ENCODE measurements at regions of chr3 and their contacts with region 1.

Region 1: DNA sequence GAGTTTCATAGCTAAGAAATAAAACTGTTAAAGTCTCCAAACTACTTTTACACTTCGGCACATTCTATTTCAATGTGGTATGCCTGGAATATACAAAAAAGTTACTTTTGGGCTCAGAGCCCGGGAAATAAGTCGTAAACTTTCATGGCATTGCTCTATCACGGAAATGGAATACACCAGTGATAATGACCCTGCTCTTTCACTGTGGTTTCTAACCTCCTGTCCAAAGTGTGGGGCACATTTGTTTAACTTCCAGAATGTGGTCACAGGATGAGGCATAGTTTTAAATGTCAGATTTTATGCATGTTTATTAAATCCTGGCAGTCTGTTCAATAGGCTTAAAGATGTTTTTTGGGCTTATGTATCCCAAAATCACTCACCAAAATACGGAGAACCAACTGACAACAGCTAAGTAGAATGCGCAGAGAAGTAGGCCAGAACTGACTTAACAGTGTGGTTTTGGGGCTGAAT is 5.1 kb downstream of the CXCR6 start:
- DNase-seq: no peak
- ATAC-seq: no peak
- H3K4me3 Mint-ChIP-seq: peak overlapping the region; percentile 34
- H3K27ac Mint-ChIP-seq: peak overlapping the region; percentile 88
- H3K4me1 Mint-ChIP-seq: peaks cover 97% of the 10 kb centered on the region
- H3K27me3 Mint-ChIP-seq: no peaks in the 10 kb centered on the region

Region 2: DNA sequence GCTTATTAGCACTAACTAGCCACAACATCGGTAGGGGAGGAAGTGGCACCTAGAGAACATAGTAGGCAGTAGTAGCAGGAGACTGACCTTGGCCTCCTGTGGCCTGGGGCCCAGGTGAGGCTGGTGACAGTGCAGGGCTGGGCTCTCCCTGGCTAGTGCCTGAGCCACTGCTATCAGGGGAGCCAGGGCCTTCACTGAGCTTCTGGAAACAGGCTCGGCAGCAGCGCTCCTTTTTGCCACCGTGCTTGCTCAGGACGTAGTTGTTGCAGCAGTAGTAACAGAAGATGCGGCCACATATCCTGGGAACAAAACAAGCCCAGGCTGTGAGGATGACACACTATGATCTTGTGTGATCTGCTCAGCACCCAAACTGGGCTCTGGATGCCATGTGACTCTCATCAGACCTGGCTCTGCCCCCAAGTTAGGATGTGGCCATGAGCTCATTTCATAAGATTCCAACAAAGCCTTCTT is 10.0 kb after region 1 on chr3:
- CTCF ChIA-PET with region 1: interaction called, 61 read pairs
- POLR2A ChIA-PET with region 1: interaction called, 12 read pairs
- DNase-seq: no peak
- ATAC-seq: no peak
- H3K4me3 Mint-ChIP-seq: no peak overlapping the region
- H3K27ac Mint-ChIP-seq: peak overlapping the region; percentile 69
- H3K4me1 Mint-ChIP-seq: peaks cover 76% of the 10 kb centered on the region
- H3K27me3 Mint-ChIP-seq: no peaks in the 10 kb centered on the region

Region 3: DNA sequence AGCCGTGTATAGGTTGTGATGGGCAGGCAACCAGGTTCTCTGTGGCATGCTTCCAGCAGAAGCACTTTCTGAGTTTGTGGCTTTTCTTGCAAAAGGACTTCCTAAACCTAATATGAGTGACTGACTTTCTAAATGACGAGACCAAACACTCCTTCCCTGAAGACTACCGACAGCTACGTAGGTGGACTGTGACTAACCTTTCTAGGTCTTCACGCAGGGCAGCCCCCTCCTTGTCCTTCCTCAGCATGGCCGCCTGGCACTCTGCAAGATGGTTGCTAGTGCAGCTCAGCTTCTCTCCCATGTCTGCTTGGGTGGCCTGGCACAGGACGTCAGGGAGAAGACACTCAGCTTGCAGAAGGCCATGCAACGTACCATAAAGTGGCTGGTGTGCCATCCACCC is 15.8 kb after region 1 on chr3:
- CTCF ChIA-PET with region 1: interaction called, 61 read pairs
- POLR2A ChIA-PET with region 1: interaction called, 15 read pairs
- DNase-seq: peak; percentile 59
- ATAC-seq: peak; percentile 50
- H3K4me3 Mint-ChIP-seq: peak overlapping the region; percentile 9
- H3K27ac Mint-ChIP-seq: peak overlapping the region; percentile 87
- H3K4me1 Mint-ChIP-seq: peaks cover 91% of the 10 kb centered on the region
- H3K27me3 Mint-ChIP-seq: no peaks in the 10 kb centered on the region

Region 4: DNA sequence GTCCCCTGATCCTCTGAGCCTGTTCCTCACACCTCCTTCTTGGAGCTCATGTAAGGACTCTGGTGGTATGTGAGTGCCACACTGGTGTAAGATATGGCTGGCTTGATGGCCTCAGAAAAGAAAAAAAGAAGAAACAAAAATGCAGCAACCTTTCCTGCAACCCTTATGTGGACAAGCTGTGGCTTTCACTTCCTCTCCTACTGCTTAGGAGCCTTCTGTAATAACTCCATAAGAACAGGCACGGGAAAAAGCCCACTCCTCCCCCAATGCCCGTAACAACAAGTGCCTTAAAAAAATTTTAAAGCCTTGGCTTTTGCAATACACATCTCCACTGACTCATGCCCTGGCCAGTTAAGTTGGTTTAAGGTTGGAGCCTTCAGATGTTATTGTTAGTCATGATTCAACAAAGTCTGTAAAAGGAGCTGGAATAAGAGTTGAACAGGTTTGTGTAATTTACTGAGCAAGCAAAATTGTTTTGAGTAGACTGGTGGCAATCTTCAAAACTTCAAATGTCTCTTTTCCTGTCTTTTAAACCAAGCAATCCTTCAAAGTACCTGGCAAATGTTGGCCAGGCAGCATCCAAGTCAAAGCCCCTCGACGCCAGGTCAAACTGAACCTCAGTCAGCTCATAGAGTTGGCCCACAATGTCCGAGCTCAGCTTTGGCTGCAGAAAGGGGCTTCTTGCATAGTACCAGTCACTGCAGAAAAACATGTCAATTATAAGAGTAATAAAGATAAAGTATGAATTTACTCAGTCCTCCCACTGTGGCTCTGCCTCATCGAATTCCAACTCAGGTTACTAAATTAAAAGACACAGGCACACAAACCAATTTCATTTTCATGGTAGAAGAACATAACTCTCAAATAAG is 24.4 kb after region 1 on chr3:
- CTCF ChIA-PET with region 1: interaction called, 15 read pairs
- POLR2A ChIA-PET with region 1: interaction called, 5 read pairs
- DNase-seq: no peak
- ATAC-seq: peak; percentile 29
- H3K4me3 Mint-ChIP-seq: peak overlapping the region; percentile 25
- H3K27ac Mint-ChIP-seq: peak overlapping the region; percentile 79
- H3K4me1 Mint-ChIP-seq: peaks cover 90% of the 10 kb centered on the region
- H3K27me3 Mint-ChIP-seq: no peaks in the 10 kb centered on the region

Region 5: GRCh38 chr3:45978006-45978761 is 29.8 kb after region 1 on chr3:
- CTCF ChIA-PET with region 1: interaction called, 15 read pairs
- POLR2A ChIA-PET with region 1: interaction called, 9 read pairs
- DNase-seq: peak; percentile 81
- ATAC-seq: peak; percentile 55
- H3K4me3 Mint-ChIP-seq: peak overlapping the region; percentile 56
- H3K27ac Mint-ChIP-seq: peak overlapping the region; percentile 88
- H3K4me1 Mint-ChIP-seq: peaks cover 91% of the 10 kb centered on the region
- H3K27me3 Mint-ChIP-seq: no peaks in the 10 kb centered on the region

Region 6: DNA sequence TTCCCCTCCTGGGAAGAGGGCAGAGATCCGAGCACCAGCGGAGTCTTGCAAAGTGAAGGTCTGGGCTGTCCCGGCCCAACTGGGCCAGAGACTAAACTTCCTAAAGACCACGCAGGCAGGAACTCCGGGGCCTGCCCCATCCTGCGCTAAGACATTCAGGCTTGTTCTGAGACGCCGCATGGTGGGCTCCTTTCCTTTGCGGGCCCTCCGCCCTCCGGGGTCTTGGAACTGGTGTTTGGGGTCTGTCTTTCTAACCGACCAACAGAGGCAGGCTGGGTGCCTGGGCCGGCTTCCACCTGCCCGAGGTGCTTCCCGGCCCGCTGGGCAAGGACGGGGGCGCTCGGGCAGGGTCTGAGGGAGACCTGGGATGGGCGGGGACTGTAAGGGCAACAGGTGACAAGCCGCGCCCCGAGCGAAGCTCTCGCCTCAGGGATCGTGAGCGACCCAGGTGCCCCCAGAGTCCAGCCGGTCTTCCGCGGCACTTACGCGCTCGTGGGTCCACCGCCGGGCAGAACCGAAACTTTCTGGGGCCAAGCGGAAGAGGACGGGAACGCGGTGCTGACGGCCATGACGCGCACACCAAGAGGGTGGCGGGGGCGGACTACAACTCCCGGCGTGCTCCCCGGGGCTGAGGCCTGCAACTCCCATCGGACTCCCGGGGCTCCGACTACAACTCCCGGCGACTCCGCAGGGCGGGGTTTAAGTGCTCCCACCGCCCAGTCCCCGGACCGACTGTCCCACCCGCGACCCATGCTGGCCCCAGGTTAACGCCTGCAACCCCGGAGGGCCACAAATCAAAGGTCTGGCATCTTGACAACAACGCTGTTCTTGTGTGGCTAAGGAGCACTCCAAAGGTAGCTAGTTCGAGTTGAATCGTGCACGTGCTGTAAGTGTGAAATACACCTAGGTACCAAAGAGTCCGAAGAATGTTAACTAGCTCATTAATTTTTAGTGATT is 47.2 kb after region 1 on chr3 and contains the start of gene FYCO1:
- CTCF ChIA-PET with region 1: interaction called, 21 read pairs
- POLR2A ChIA-PET with region 1: interaction called, 6 read pairs
- DNase-seq: peak; percentile 94
- ATAC-seq: peak; percentile 83
- H3K4me3 Mint-ChIP-seq: peak within 1 kb of the TSS; percentile 87
- H3K27ac Mint-ChIP-seq: peak within 1 kb of the TSS; percentile 92
- H3K4me1 Mint-ChIP-seq: peaks cover 62% of the 10 kb centered on the region
- H3K27me3 Mint-ChIP-seq: peaks cover 4% of the 10 kb centered on the region
- total RNA-seq, gene FYCO1: 16.6 to 19.5 TPM

Region 7: GRCh38 chr3:46070595-46071093 is 122.3 kb after region 1 on chr3:
- CTCF ChIA-PET with region 1: interaction called, 389 read pairs
- POLR2A ChIA-PET with region 1: interaction called, 5 read pairs
- DNase-seq: no peak
- ATAC-seq: peak; percentile 45
- H3K4me3 Mint-ChIP-seq: peak overlapping the region; percentile 8
- H3K27ac Mint-ChIP-seq: peak overlapping the region; percentile 68
- H3K4me1 Mint-ChIP-seq: peaks cover 81% of the 10 kb centered on the region
- H3K27me3 Mint-ChIP-seq: peaks cover 9% of the 10 kb centered on the region

Measured in activated CD8-positive, alpha-beta T cell treated with anti-CD3 and anti-CD28 coated beads, Interleukin-2, amount 10 ng/mL, durations not matched to agents 7 days and 5 days (primary cell).